ENCODE measurements at regions of chr13 and their contacts with region 1.

Region 1: GRCh38 chr13:110371550-110372465 is 64.7 kb downstream of the COL4A2 start:
- DNase-seq: no peak
- H3K4me3 Mint-ChIP-seq: no peak overlapping the region
- H3K27ac Mint-ChIP-seq: no peak overlapping the region
- H3K4me1 Mint-ChIP-seq: no peaks in the 10 kb centered on the region
- H3K27me3 Mint-ChIP-seq: peaks cover 32% of the 10 kb centered on the region

Region 2: GRCh38 chr13:109548374-109548773 is 823.4 kb before region 1 on chr13:
- CTCF ChIA-PET with region 1: no interaction called
- POLR2A ChIA-PET with region 1: no interaction called
- intact Hi-C with region 1: loop called (anchors 10 kb)
- DNase-seq: no peak
- H3K4me3 Mint-ChIP-seq: no peak overlapping the region
- H3K27ac Mint-ChIP-seq: no peak overlapping the region
- H3K4me1 Mint-ChIP-seq: peaks cover 3% of the 10 kb centered on the region
- H3K27me3 Mint-ChIP-seq: peaks cover 5% of the 10 kb centered on the region

Region 3: GRCh38 chr13:110080187-110080586 is 291.6 kb before region 1 on chr13:
- CTCF ChIA-PET with region 1: no interaction called
- POLR2A ChIA-PET with region 1: no interaction called
- intact Hi-C with region 1: no loop called
- DNase-seq: no peak
- H3K4me3 Mint-ChIP-seq: no peak overlapping the region
- H3K27ac Mint-ChIP-seq: no peak overlapping the region
- H3K4me1 Mint-ChIP-seq: no peaks in the 10 kb centered on the region
- H3K27me3 Mint-ChIP-seq: peaks cover 6% of the 10 kb centered on the region

Region 4: DNA sequence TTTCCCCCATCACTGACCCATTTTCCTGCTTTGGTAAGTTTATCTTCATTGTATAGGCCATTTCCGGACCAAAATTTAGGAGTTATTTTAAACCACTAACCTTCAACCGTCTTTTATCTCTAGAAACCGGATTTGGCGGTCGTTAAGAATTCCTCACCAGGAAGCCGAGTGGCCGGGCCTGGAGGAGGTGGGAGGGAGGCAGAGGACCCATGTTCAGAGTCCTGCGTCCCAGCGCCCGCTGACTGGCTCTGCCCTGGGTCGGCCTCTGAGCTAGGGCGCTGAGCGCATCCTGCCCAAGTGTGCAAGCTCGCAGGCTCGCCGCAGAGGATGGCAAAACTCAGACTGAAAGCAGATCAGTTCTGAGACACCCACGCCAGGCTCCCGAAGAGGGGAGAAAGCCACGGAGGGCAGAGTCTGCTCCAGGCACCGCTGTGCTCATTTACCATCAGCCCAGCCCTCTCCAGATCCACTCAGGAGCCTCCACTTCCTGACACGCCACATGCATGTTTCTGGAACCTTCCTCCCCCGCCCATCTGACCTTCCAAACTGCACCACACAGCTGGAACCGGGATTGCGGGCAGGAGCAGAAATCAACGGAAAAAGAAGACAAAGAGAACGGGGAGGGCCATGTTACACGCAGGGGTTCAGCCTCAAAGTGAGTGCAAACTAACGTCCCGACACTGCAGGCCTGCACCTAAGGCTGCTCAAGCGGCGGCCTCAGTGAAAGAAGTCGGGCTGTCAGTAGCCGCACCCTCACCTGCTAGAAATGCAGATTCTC is 73.1 kb before region 1 on chr13:
- CTCF ChIA-PET with region 1: no interaction called
- POLR2A ChIA-PET with region 1: no interaction called
- intact Hi-C with region 1: no loop called
- DNase-seq: peak; percentile 62
- H3K4me3 Mint-ChIP-seq: no peak overlapping the region
- H3K27ac Mint-ChIP-seq: no peak overlapping the region
- H3K4me1 Mint-ChIP-seq: peaks cover 8% of the 10 kb centered on the region
- H3K27me3 Mint-ChIP-seq: peaks cover 49% of the 10 kb centered on the region

Region 5: GRCh38 chr13:110330491-110331001 is 41.3 kb before region 1 on chr13:
- CTCF ChIA-PET with region 1: no interaction called
- POLR2A ChIA-PET with region 1: no interaction called
- intact Hi-C with region 1: no loop called
- DNase-seq: no peak
- H3K4me3 Mint-ChIP-seq: no peak overlapping the region
- H3K27ac Mint-ChIP-seq: no peak overlapping the region
- H3K4me1 Mint-ChIP-seq: no peaks in the 10 kb centered on the region
- H3K27me3 Mint-ChIP-seq: peaks cover 18% of the 10 kb centered on the region